Transverse colon (tissue), 4 donors: ENCODE measurements at regions of chr4 and their contacts with region 1.

Region 1: GRCh38 chr4:121252224-121252806 is 88.2 kb upstream of the TNIP3 start:
- DNase-seq: peak; percentile 72
- H3K4me3 ChIP-seq: no peak overlapping the region
- H3K27ac ChIP-seq: no peak overlapping the region
- H3K4me1 ChIP-seq: no peaks in the 10 kb centered on the region
- H3K27me3 ChIP-seq: no peaks in the 10 kb centered on the region
- CTCF ChIP-seq: peak; percentile 63 to 83 (median 77)
- EP300 ChIP-seq: no peak
- POLR2A ChIP-seq: no peak

Region 2: GRCh38 chr4:121182296-121182695 is 70.0 kb before region 1 on chr4:
- in situ Hi-C with region 1: no loop called
- intact Hi-C with region 1: no loop called
- DNase-seq: no peak
- H3K4me3 ChIP-seq: peak overlapping the region in 2 of 4 donors; percentile 15 to 35
- H3K27ac ChIP-seq: peak overlapping the region; percentile 60 to 82 (median 70)
- H3K4me1 ChIP-seq: peaks cover 0 to 26% (median 14%) of the 10 kb centered on the region in 4 donors
- H3K27me3 ChIP-seq: no peaks in the 10 kb centered on the region
- CTCF ChIP-seq: no peak
- EP300 ChIP-seq: no peak
- POLR2A ChIP-seq: no peak

Region 3: GRCh38 chr4:121192480-121192879 is 59.8 kb before region 1 on chr4:
- in situ Hi-C with region 1: loop called in 2 of 4 experiments (anchors 5 kb)
- intact Hi-C with region 1: no loop called
- DNase-seq: no peak
- H3K4me3 ChIP-seq: no peak overlapping the region
- H3K27ac ChIP-seq: no peak overlapping the region
- H3K4me1 ChIP-seq: peaks cover 0 to 8% (median 0%) of the 10 kb centered on the region in 4 donors
- H3K27me3 ChIP-seq: no peaks in the 10 kb centered on the region
- CTCF ChIP-seq: peak; percentile 42 to 75 (median 68)
- EP300 ChIP-seq: no peak
- POLR2A ChIP-seq: no peak